A549 (cell line): ENCODE measurements at regions of chr12 and their contacts with region 1.

Region 1: DNA sequence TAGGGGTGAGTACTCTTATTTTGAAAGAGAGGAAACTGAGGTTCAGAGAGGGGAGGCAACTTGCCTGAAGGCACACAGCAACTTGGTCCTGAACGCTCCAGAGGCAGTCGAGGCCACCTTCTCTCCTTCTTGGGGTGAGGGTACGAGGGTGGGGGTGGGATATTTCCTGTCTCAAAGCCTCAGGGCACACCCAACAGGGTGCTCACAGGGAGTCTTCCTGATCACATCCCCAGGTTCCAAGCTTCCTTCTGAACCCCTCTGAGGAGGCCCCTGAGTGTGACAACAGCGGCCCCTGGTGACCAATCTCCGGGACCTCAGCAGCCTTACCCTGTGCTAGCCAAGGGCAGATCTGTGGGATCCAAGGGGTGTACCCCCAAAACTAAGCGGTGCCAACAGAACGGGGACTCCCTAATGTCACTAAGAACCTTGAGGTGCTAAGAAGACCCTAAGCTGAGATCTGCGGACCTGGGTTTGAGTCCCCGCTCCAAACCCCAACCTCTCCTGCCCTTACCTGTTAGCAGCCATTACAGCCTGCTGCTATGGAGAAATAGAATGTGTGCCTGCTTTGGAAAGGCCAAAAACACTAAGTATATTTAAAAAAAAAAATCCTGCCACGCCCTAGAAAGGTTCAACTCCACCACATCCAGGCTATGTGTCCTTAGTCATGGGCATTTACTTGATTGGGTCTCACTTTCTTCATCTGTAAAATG is 57.9 kb downstream of the TRPV4 start:
- DNase-seq: peak; percentile 70 to 89
- ATAC-seq: peak; percentile 82 to 93
- H3K4me3 ChIP-seq: no peak overlapping the region
- H3K27ac ChIP-seq: no peak overlapping the region
- H3K4me1 ChIP-seq: no peaks in the 10 kb centered on the region
- CTCF ChIP-seq: peak; percentile 95
- EP300 ChIP-seq: no peak
- POLR2A ChIP-seq: no peak
- RAD21 ChIP-seq: peak; percentile 95 to 98

Region 2: GRCh38 chr12:109512608-109513007 is 262.7 kb before region 1 on chr12:
- CTCF ChIA-PET with region 1: interaction called, 167 read pairs
- POLR2A ChIA-PET with region 1: interaction called, 3 read pairs
- DNase-seq: no peak
- ATAC-seq: no peak
- H3K4me3 ChIP-seq: no peak overlapping the region
- H3K27ac ChIP-seq: no peak overlapping the region
- H3K4me1 ChIP-seq: no peaks in the 10 kb centered on the region
- CTCF ChIP-seq: no peak
- EP300 ChIP-seq: no peak
- POLR2A ChIP-seq: no peak
- RAD21 ChIP-seq: no peak

Region 3: DNA sequence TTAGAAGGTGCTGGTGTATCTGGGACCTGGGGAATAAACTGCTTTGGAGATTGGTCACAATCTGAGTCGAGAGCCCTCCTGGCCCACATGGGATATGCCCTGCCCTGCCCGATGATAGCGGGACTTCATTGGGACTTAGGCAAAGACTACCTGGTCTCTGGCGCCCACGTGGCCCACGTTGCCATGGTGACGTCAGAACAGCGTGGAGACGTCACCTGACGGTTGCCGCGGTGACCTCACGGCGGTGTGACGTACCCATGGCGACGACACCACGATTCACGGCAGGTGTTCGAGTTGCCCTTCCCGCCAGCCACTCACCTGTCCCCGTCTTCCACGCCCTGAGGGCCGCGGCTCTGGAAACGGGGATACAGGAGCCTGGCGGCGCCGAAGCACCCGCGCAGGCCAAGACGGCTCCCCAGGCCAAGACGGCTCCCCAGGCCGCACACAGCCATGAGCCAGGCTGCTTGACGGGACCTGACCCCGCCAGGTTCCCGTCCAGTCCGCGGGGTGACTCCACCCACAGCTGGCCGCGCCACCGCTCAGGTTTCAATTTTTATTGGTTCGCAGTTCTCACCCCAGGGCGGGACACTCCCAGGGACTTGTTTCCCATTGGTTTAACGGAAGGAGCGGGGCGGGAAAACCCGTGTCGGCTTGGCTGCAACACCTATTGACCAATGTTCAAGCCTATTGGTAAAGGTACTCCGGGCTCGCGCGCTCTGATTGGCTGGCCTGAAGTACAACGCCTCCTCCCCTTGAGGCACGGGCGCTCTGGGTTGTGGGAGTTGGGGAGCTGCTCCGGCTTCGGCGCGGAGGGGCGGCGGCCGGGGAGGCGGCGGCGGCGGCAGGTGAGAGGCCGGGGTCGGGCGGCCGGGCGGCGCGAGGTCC is 202.1 kb before region 1 on chr12 and contains the starts of genes MMAB and MVK:
- CTCF ChIA-PET with region 1: interaction called, 10 read pairs
- POLR2A ChIA-PET with region 1: no interaction called
- DNase-seq: peak; percentile 99 to 100
- ATAC-seq: peak; percentile 97 to 99
- H3K4me3 ChIP-seq: peak within 1 kb of the TSS; percentile 77
- H3K27ac ChIP-seq: peak within 1 kb of the TSS; percentile 83 to 87
- H3K4me1 ChIP-seq: peaks cover 11% of the 10 kb centered on the region; the same call in 1 of the 3 replicates
- CTCF ChIP-seq: no peak
- EP300 ChIP-seq: no peak
- POLR2A ChIP-seq: peak; percentile 70
- RAD21 ChIP-seq: no peak
- polyA plus RNA-seq, gene MMAB: 23.0 and 26.1 TPM in 2 replicates
- polyA plus RNA-seq, gene MVK: 5.9 and 7.0 TPM in 2 replicates

Region 4: GRCh38 chr12:109719236-109720022 is 55.9 kb before region 1 on chr12:
- CTCF ChIA-PET with region 1: interaction called, 17 read pairs
- POLR2A ChIA-PET with region 1: no interaction called
- DNase-seq: peak in 1 of 2 experiments; percentile 49
- ATAC-seq: peak; percentile 57 to 79
- H3K4me3 ChIP-seq: no peak overlapping the region
- H3K27ac ChIP-seq: no peak overlapping the region
- H3K4me1 ChIP-seq: peaks cover 7% of the 10 kb centered on the region; the same call in 2 of the 3 replicates
- CTCF ChIP-seq: peak; percentile 22; the same call in 1 of the 3 replicates
- EP300 ChIP-seq: no peak
- POLR2A ChIP-seq: no peak
- RAD21 ChIP-seq: no peak; a peak in 1 of 5 replicates

Region 5: GRCh38 chr12:109763201-109763841 is 12.0 kb before region 1 on chr12:
- CTCF ChIA-PET with region 1: interaction called, 88 read pairs
- POLR2A ChIA-PET with region 1: no interaction called
- DNase-seq: peak in 1 of 2 experiments; percentile 60
- ATAC-seq: peak; percentile 53 to 64
- H3K4me3 ChIP-seq: no peak overlapping the region
- H3K27ac ChIP-seq: no peak overlapping the region
- H3K4me1 ChIP-seq: no peaks in the 10 kb centered on the region
- CTCF ChIP-seq: no peak
- EP300 ChIP-seq: no peak
- POLR2A ChIP-seq: no peak
- RAD21 ChIP-seq: no peak

Region 6: DNA sequence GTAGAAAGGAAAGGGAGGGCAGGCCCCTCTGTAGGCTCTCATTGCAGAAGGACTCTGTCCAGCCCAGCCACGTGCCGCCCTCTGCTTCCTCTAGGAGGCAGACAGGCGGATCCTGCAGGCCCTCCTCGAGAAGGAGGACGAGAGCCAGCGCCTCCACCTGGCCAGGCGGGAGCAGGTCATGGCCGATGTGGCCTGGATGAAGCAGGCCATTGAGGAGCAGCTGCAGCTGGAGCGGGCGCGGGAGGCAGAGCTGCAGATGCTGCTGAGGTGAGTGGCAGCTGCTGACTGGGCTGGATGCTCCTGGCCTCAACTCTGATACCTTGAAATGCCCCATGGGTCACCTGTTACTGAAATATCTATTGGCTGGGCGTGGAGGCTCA is 135.6 kb after region 1 on chr12:
- CTCF ChIA-PET with region 1: no interaction called
- POLR2A ChIA-PET with region 1: no interaction called
- DNase-seq: peak; percentile 81 to 83
- ATAC-seq: peak; percentile 78 to 96
- H3K4me3 ChIP-seq: no peak overlapping the region
- H3K27ac ChIP-seq: no peak overlapping the region
- H3K4me1 ChIP-seq: no peaks in the 10 kb centered on the region
- CTCF ChIP-seq: peak; percentile 40; the same call in 2 of the 3 replicates
- EP300 ChIP-seq: no peak
- POLR2A ChIP-seq: no peak
- RAD21 ChIP-seq: peak in 1 of 2 experiments; percentile 36; a peak in 2 of 5 replicates

Region 7: GRCh38 chr12:109937371-109937770 is 162.0 kb after region 1 on chr12:
- CTCF ChIA-PET with region 1: no interaction called
- POLR2A ChIA-PET with region 1: no interaction called
- DNase-seq: no peak
- ATAC-seq: no peak
- H3K4me3 ChIP-seq: no peak overlapping the region
- H3K27ac ChIP-seq: no peak overlapping the region
- H3K4me1 ChIP-seq: no peaks in the 10 kb centered on the region
- CTCF ChIP-seq: no peak
- EP300 ChIP-seq: no peak
- POLR2A ChIP-seq: no peak
- RAD21 ChIP-seq: no peak